ENCODE measurements at regions of chr1 and their contacts with region 1.

Region 1: DNA sequence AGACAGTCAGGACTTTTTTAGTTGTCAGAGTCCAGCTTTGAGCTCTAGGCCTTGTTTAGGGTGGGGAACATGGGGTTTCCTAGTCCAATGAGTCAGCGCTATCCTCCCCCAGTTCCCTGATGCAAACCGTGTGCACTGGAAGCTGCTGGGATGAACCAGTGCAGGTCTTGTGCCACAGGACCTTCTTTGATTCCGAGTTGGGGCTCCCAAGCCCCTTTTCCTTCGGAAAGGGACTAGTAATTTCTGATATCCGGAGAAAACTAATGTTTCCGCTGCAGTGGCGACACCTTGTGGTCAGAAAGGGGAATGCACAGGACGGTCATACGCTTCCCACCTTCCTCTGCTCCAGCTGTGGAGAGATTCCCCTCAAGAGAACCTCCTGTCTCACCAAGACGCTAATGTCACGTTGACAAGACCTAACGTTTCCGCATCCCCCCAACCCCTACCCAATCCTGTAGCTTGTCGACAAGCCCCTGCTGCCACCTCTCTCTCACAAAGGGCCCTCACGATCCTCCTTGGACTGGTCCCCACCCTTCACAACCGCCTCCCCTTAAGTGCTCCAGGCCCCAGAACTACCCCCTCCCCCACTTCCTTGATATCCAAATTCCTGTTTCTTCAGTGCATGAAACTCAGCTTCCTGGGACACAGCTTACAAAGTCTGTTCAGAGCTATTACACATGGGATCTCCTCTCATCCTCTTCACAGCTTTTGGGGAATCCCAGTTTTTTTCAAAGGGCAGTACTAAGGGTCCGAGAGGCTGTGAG is 30.9 kb downstream of the GPA33 start:
- DNase-seq: peak; percentile 46 to 85 (median 74)
- ATAC-seq: peak; percentile 84
- H3K4me3 ChIP-seq: no peak overlapping the region
- H3K4me3 Mint-ChIP-seq: no peak overlapping the region
- H3K27ac ChIP-seq: no peak overlapping the region
- H3K27ac Mint-ChIP-seq: no peak overlapping the region
- H3K4me1 ChIP-seq: peaks cover 5% of the 10 kb centered on the region
- H3K4me1 Mint-ChIP-seq: peaks cover 6% of the 10 kb centered on the region
- H3K27me3 ChIP-seq: no peaks in the 10 kb centered on the region
- H3K27me3 Mint-ChIP-seq: no peaks in the 10 kb centered on the region
- CTCF ChIP-seq: peak; percentile 93

Region 2: GRCh38 chr1:166884040-166884642 is 175.1 kb before region 1 on chr1:
- CTCF ChIA-PET with region 1: interaction called, 10 read pairs
- POLR2A ChIA-PET with region 1: no interaction called
- intact Hi-C with region 1: no loop called
- DNase-seq: peak in 6 of 9 experiments; percentile 25 to 54 (median 38)
- ATAC-seq: peak; percentile 72
- H3K4me3 ChIP-seq: no peak overlapping the region
- H3K4me3 Mint-ChIP-seq: no peak overlapping the region
- H3K27ac ChIP-seq: no peak overlapping the region
- H3K27ac Mint-ChIP-seq: no peak overlapping the region
- H3K4me1 ChIP-seq: peaks cover 6% of the 10 kb centered on the region
- H3K4me1 Mint-ChIP-seq: peaks cover 16% of the 10 kb centered on the region
- H3K27me3 ChIP-seq: peaks cover 0 to 7% of the 10 kb centered on the region in 2 experiments
- H3K27me3 Mint-ChIP-seq: peaks cover 21% of the 10 kb centered on the region
- CTCF ChIP-seq: peak; percentile 50

Region 3: DNA sequence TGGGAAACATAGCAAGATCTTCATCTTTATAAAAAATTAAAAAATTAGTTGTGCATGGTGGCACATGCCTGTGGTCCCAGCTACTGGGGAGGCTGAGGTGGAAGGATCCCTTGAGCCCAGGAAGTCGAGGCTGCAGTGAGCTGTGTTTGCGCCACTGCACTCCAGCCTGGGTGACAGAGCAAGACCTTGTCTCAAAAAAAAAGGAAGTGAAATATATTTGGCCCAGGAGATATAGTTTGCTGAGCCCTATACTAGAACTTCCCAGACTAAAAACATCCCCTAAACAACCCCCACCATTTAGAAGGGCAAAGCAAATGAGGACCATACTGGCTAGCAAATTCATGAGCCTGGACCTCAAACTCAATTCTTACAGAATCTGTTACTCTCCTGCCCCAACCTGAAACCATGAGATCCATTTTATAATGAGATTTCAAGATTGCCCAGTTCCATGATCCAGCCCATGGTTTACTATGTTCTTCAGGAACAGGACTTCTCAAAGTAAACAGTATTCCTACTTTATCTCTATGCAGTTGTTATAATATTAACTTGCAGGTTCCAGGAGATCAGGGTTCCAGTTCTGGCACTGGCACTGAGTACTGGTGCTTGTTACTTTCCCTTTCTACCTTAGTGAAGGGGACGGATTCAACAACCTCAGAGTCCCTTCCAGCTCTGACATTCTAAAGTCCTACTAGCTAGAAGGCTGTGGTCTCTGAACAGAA is 134.2 kb before region 1 on chr1:
- CTCF ChIA-PET with region 1: interaction called, 12 read pairs
- POLR2A ChIA-PET with region 1: no interaction called
- intact Hi-C with region 1: no loop called
- DNase-seq: no peak
- ATAC-seq: no peak
- H3K4me3 ChIP-seq: no peak overlapping the region
- H3K4me3 Mint-ChIP-seq: no peak overlapping the region
- H3K27ac ChIP-seq: no peak overlapping the region
- H3K27ac Mint-ChIP-seq: no peak overlapping the region
- H3K4me1 ChIP-seq: no peaks in the 10 kb centered on the region
- H3K4me1 Mint-ChIP-seq: peaks cover 5% of the 10 kb centered on the region
- H3K27me3 ChIP-seq: peaks cover 5 to 20% of the 10 kb centered on the region in 2 experiments
- H3K27me3 Mint-ChIP-seq: peaks cover 23% of the 10 kb centered on the region
- CTCF ChIP-seq: no peak

Region 4: DNA sequence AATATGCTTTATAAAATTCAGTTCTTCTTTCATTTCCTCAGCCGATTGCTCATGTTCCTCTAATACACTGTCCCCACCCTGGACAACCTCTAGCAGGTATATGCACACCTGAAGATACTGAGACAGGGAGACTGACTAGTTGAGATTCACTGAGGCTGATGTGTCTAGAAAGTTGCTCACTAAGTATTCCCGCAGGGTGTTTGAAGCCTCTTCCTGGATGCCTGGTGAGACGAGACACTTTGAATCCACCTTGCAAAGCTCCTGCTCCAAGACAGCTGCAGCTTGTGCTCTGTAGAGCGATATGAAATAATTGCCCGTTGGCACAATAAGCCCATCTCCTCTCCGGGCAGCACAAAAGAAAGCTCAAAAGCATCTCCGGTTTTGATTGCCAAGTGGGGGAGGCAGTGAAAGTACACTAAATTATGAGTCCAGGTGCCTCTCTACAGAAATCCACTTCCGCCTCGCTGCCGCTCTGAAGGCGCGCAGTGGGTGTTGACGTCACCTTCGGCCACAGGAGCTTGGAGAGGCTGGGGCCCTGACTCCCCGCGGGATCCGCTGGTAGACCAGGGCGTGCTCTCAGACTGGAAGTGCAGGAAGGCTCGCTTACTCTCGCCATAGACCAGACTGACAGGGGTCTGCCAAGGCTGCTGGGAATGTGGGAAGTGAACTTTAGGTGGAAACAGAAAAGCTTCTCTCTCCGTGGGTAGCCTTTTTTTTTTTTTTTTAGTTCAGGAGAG is 15.3 kb before region 1 on chr1:
- CTCF ChIA-PET with region 1: interaction called, 13 read pairs
- POLR2A ChIA-PET with region 1: interaction called, 4 read pairs
- intact Hi-C with region 1: no loop called
- DNase-seq: peak; percentile 39 to 85 (median 67)
- ATAC-seq: peak; percentile 97
- H3K4me3 ChIP-seq: peak overlapping the region; percentile 46 to 74
- H3K4me3 Mint-ChIP-seq: peak overlapping the region; percentile 91
- H3K27ac ChIP-seq: peak overlapping the region in 1 of 2 experiments; percentile 19
- H3K27ac Mint-ChIP-seq: peak overlapping the region; percentile 80
- H3K4me1 ChIP-seq: peaks cover 9% of the 10 kb centered on the region
- H3K4me1 Mint-ChIP-seq: peaks cover 17% of the 10 kb centered on the region
- H3K27me3 ChIP-seq: peaks cover 0 to 3% of the 10 kb centered on the region in 2 experiments
- H3K27me3 Mint-ChIP-seq: peaks cover 3% of the 10 kb centered on the region
- CTCF ChIP-seq: no peak

Region 5: DNA sequence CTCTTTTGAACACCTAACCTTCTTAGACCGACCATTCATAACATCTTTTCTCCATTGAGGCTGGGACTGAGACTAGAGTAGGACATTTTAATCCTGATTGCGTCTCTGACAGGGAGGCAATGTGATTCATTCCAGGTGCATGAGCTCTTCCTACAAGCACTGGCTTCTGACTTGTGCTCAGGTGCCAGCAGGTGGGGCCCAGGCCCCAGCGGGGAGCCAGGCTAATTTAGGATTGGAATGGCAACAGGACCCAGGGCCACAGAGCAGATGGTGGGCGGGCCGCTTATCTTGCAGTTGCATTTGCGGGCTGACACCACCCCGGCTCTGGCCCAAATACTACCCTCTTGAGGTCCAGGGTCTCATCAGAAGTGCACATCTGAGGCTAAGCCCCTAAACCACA is 26.8 kb after region 1 on chr1:
- CTCF ChIA-PET with region 1: interaction called, 11 read pairs
- POLR2A ChIA-PET with region 1: no interaction called
- intact Hi-C with region 1: no loop called
- DNase-seq: no peak
- ATAC-seq: no peak
- H3K4me3 ChIP-seq: no peak overlapping the region
- H3K4me3 Mint-ChIP-seq: no peak overlapping the region
- H3K27ac ChIP-seq: no peak overlapping the region
- H3K27ac Mint-ChIP-seq: no peak overlapping the region
- H3K4me1 ChIP-seq: peaks cover 27% of the 10 kb centered on the region
- H3K4me1 Mint-ChIP-seq: peaks cover 36% of the 10 kb centered on the region
- H3K27me3 ChIP-seq: no peaks in the 10 kb centered on the region
- H3K27me3 Mint-ChIP-seq: no peaks in the 10 kb centered on the region
- CTCF ChIP-seq: no peak